ENCODE measurements at regions of chr3 and their contacts with region 1.

Region 1: DNA sequence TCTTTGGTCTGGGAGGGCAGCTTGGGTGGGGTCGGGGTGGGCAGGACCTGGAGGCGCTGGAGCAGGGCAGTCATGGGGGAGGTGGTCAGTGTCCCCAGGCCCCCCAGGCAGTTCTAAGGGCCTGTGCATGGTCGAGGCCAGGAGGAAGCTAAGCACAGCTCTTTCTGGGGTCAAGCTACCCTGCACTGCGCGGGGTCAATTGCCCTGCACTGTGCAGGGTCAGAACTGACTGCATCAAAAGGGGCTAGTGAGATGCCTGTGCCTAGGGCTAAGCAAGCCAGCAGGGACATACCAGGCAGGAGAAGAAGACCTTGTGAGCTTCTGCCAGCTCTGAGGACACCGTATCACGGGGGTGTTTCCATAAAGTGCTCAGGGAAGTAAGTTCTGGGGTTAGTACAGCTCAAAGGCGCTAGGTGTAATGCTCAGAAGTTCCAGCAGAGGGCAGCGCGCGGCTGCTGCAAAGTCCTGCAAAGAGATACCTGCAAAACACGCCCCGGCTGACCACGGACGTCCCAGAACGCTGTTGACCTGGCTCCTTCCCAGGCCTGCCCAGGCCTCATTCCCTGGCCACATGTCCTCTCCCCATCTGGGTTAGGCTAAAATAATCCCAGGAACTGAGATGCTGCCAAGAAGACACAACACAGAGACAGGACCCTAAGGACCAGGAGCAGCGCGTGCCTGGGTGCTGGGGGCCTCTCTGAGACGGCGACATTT is 18.8 kb upstream of the IQSEC1 start:
- DNase-seq: peak; percentile 89
- ATAC-seq: peak; percentile 87
- H3K4me3 Mint-ChIP-seq: no peak overlapping the region
- H3K27ac Mint-ChIP-seq: peak overlapping the region; percentile 55
- H3K4me1 Mint-ChIP-seq: peaks cover 13% of the 10 kb centered on the region
- H3K27me3 Mint-ChIP-seq: peaks cover 22% of the 10 kb centered on the region

Region 2: GRCh38 chr3:13077431-13078162 is 14.5 kb before region 1 on chr3:
- CTCF ChIA-PET with region 1: interaction called, 52 read pairs
- DNase-seq: no peak
- ATAC-seq: peak; percentile 12
- H3K4me3 Mint-ChIP-seq: no peak overlapping the region
- H3K27ac Mint-ChIP-seq: peak overlapping the region; percentile 79
- H3K4me1 Mint-ChIP-seq: peaks cover 27% of the 10 kb centered on the region
- H3K27me3 Mint-ChIP-seq: peaks cover 25% of the 10 kb centered on the region

Region 3: DNA sequence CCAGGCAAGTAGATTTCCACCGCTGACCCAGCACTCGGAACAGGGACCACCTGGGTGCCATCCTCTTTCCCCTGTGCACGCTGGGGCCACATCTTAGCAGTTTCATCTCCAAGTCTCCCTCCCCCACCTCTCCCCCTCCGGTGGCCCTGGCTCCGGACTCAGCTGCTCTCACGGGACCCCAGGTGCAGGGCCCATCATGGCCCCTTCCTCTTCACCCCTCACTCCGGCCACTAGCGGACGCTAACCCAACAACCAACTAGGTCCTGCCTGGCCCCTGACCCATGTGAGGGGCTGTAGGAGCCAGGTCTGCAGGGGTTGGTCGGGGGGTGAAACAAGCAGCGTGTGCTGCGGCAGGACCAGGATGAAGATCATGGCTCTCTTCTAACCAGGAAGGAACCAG is 12.5 kb after region 1 on chr3:
- CTCF ChIA-PET with region 1: interaction called, 18 read pairs
- DNase-seq: no peak
- ATAC-seq: no peak
- H3K4me3 Mint-ChIP-seq: no peak overlapping the region
- H3K27ac Mint-ChIP-seq: no peak overlapping the region
- H3K4me1 Mint-ChIP-seq: no peaks in the 10 kb centered on the region
- H3K27me3 Mint-ChIP-seq: no peaks in the 10 kb centered on the region

Region 4: GRCh38 chr3:13346481-13347389 is 254.7 kb after region 1 on chr3:
- CTCF ChIA-PET with region 1: interaction called, 14 read pairs
- DNase-seq: peak; percentile 82
- ATAC-seq: peak; percentile 82
- H3K4me3 Mint-ChIP-seq: no peak overlapping the region
- H3K27ac Mint-ChIP-seq: peak overlapping the region; percentile 48
- H3K4me1 Mint-ChIP-seq: peaks cover 55% of the 10 kb centered on the region
- H3K27me3 Mint-ChIP-seq: no peaks in the 10 kb centered on the region

Region 5: GRCh38 chr3:13461169-13462158 is 369.4 kb after region 1 on chr3:
- CTCF ChIA-PET with region 1: interaction called, 40 read pairs
- DNase-seq: peak; percentile 87
- ATAC-seq: peak; percentile 96
- H3K4me3 Mint-ChIP-seq: no peak overlapping the region
- H3K27ac Mint-ChIP-seq: no peak overlapping the region
- H3K4me1 Mint-ChIP-seq: no peaks in the 10 kb centered on the region
- H3K27me3 Mint-ChIP-seq: peaks cover 28% of the 10 kb centered on the region

Region 6: DNA sequence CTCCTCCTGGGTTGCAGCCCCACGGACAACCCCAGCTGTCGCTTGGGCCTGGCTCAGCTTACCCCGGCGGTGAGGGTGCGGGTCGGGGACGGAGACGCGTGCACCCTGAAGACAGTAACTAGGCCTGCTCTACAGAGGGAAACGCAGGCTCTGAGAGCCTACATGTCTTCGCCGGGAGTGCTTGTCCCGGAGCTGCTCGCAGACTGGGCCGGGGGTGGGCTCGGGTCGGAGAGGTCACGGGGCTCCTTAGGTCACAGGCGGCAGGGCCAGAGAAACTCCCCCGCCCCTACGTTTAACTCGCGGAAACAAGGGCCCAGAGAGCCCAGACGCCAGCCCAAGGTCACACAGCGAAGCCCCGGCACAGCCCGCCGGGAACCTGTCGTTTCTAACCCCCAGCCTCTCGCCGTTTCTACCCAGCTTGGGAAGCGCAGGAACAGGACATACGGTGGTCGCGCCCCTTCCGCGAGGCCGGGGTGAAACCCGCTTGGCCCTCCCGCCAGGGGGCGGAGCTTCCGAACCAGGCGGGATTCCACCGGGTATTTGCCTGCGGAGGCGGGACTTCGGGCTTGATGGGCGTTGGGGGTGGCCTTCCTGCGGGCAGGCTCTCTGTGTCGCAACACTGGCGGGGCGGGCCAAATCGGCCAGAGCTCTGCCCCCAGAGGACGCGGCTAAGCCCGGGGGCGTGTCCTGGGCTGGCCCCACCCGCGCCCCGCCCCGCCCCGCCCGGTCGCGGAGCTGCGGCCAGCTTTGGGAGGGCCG is 387.7 kb after region 1 on chr3 and contains the start of gene HDAC11:
- CTCF ChIA-PET with region 1: interaction called, 12 read pairs
- DNase-seq: peak; percentile 99
- ATAC-seq: peak; percentile 96
- H3K4me3 Mint-ChIP-seq: peak within 1 kb of the TSS; percentile 83
- H3K27ac Mint-ChIP-seq: peak within 1 kb of the TSS; percentile 86
- H3K4me1 Mint-ChIP-seq: peaks cover 10% of the 10 kb centered on the region
- H3K27me3 Mint-ChIP-seq: peaks cover 11% of the 10 kb centered on the region
- total RNA-seq, gene HDAC11: 0.70 to 1.2 TPM

Measured in activated CD8-positive, alpha-beta memory T cell treated with anti-CD3 and anti-CD28 coated beads, Interleukin-2, amount 10 ng/mL, durations not matched to agents 7 days and 5 days (primary cell).